Activated B cell treated with CpG ODN at 0.5 μM for 24 hours (primary cell): ENCODE measurements at regions of chr6 and their contacts with region 1.

Region 1: DNA sequence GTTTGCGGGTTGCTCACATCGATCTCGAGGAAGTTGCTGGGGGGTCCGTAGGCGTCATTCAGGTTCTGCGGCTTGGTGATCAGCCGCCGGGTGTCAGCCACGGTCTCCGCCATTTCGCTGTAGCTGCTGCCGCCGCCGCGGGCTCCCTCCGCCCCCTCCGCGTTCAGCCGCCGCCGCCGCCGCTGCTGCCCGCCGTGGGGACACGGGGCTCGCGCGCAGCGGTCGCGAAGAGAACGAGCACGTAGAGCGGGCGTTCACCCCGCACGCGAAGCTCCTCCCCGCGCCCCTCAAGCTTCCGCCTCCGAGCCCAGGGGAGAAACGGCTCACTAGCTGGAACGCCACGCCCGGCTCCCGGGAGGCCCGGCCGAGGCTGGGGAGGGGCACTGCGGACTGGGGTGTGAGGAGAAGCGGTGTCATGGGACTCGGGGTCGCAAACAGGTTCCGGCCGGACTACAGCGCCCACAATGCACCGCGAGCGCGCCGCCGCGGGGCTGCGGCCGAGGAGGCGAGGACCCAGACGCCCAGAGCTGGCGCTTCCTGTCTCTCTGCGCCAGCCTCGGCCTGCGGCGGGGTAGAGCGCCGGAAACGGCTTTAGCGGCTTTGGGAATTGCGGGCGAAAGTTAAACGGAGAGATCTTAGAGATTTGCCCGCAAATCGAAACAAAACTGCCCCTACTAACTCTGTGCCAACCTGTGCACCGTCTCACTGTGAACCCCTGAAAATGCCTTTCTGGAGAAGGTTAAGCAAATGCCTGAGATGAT is at the start of gene SNX3:
- DNase-seq: peak; percentile 98
- ATAC-seq: peak; percentile 92
- H3K4me3 Mint-ChIP-seq: peak within 1 kb of the TSS; percentile 93
- H3K27ac Mint-ChIP-seq: peak within 1 kb of the TSS; percentile 98
- H3K4me1 Mint-ChIP-seq: peaks cover 43% of the 10 kb centered on the region
- H3K27me3 Mint-ChIP-seq: no peaks in the 10 kb centered on the region
- CTCF ChIP-seq: no peak
- total RNA-seq, gene SNX3: 121 and 133 TPM in 2 replicates

Region 2: DNA sequence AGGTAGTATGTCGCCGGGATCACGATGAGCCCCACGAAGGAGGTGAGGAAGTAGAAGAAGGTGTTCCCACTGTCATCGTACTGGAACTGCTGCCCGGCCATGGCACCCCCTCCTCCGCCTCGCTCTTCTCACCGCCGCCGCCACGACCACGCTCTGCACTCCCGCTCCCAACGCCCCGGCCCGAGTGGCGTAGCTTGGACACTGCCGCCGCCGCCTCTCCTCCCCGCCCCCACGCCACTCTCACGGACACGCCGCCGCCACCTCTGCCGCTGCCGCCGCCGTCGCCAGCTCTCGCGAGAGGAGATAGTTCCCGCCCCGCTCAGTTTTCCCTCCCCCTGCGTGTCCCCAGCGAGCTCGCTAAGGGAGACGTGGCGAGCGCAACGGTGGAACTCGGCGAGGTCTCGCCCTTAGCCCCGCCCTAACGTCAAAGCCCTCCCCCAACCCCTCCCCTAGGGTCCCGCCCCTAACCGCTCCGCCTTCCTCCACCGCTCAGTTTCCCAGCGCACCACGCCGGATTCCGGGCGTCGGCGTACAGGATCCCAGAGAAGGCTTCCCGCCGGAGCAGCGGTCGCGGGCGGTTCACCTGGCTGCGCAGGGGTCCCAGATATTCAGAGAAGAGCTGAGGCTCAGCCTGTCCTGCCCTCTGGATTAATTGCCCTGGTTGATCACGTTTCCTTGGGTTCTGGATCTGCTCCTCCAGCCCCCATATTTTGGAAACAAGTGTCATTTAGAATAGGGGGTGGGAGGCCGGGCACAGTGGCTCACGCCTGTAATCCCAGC is 302.9 kb before region 1 on chr6 and contains the start of gene SEC63:
- CTCF ChIA-PET with region 1: no interaction called
- POLR2A ChIA-PET with region 1: interaction called, 3 read pairs
- intact Hi-C with region 1: loop called (anchors 1 kb)
- DNase-seq: peak; percentile 95
- ATAC-seq: peak; percentile 97
- H3K4me3 Mint-ChIP-seq: peak within 1 kb of the TSS; percentile 98
- H3K27ac Mint-ChIP-seq: peak within 1 kb of the TSS; percentile 94
- H3K4me1 Mint-ChIP-seq: peaks cover 27% of the 10 kb centered on the region
- H3K27me3 Mint-ChIP-seq: no peaks in the 10 kb centered on the region
- CTCF ChIP-seq: no peak
- total RNA-seq, gene SEC63: 64.4 and 68.3 TPM in 2 replicates

Region 3: GRCh38 chr6:108250240-108250866 is 10.6 kb before region 1 on chr6:
- CTCF ChIA-PET with region 1: no interaction called
- POLR2A ChIA-PET with region 1: interaction called, 16 read pairs
- intact Hi-C with region 1: loop called (anchors 2 kb)
- DNase-seq: no peak
- ATAC-seq: peak; percentile 65
- H3K4me3 Mint-ChIP-seq: no peak overlapping the region
- H3K27ac Mint-ChIP-seq: peak overlapping the region; percentile 5
- H3K4me1 Mint-ChIP-seq: peaks cover 84% of the 10 kb centered on the region
- H3K27me3 Mint-ChIP-seq: no peaks in the 10 kb centered on the region
- CTCF ChIP-seq: no peak

Region 4: GRCh38 chr6:108348655-108349349 is 87.8 kb after region 1 on chr6:
- CTCF ChIA-PET with region 1: no interaction called
- POLR2A ChIA-PET with region 1: interaction called, 5 read pairs
- intact Hi-C with region 1: loop called (anchors 1 kb)
- DNase-seq: no peak
- ATAC-seq: peak; percentile 94
- H3K4me3 Mint-ChIP-seq: peak overlapping the region; percentile 75
- H3K27ac Mint-ChIP-seq: peak overlapping the region; percentile 99
- H3K4me1 Mint-ChIP-seq: peaks cover 34% of the 10 kb centered on the region
- H3K27me3 Mint-ChIP-seq: no peaks in the 10 kb centered on the region
- CTCF ChIP-seq: no peak

Region 5: DNA sequence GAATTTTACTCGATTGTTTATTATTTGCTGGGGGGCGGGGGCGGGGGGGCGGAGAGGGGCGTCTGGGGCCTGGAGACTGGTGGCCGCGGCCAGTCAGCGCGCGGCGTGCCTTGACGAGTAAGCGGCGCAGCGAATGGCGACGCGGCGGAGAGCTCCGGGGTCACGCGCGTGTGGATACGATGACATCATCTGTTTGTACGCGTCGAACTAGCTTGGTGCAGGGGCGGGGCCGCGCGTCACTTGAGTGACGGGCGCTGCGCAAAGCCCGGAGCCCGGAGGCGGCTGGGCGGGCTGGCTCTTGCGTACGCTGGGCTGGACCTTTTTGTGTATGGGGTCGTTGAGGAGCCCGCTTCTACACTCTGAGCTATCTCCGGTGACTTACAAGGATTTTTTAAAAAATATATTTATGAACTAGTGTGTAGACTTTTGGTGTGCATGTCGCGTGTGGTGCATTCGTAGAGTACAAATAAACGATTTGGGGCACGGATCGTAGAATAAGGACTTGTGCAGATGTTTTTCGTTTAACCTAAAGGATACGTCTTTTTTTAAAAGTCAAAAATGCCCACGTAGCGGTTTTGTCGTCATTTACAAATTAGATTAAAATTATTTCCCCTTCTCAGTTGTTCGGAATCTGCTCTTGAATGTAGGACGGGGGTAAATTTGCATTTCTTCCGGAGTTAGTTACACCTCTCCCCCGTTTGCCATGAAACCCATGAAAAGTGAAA is 297.5 kb after region 1 on chr6:
- CTCF ChIA-PET with region 1: no interaction called
- POLR2A ChIA-PET with region 1: interaction called, 9 read pairs
- intact Hi-C with region 1: loop called (anchors 1 kb)
- DNase-seq: peak; percentile 93
- ATAC-seq: peak; percentile 65
- H3K4me3 Mint-ChIP-seq: peak overlapping the region; percentile 95
- H3K27ac Mint-ChIP-seq: peak overlapping the region; percentile 97
- H3K4me1 Mint-ChIP-seq: peaks cover 24% of the 10 kb centered on the region
- H3K27me3 Mint-ChIP-seq: peaks cover 8% of the 10 kb centered on the region
- CTCF ChIP-seq: no peak